Sigmoid colon (tissue), 7 donors: ENCODE measurements at regions of chr5 and their contacts with region 1.

Region 1: DNA sequence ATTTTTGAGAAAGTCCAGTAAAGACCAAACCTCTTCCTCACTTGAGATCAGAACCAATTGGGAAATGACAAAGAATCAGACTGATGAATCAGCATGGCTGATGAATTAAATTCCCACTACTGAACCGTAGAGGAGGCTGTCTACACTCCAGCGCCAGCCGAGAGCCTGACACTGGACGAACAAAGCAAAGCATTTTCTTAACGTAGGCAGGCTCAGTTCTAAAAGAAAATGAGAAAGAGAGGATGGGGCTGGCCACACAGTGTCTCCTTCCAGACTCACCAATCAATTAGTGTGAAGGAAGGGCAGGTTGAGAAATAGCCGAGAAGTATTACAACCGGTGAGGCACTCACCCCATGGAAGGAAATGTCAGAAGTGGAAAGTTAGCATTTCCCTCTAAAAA is 49.4 kb downstream of the ITGA1 start:
- DNase-seq: no peak
- H3K4me3 ChIP-seq: peak overlapping the region in 2 of 4 donors; percentile 8 to 19
- H3K27ac ChIP-seq: peak overlapping the region; percentile 76 to 83 (median 80)
- H3K4me1 ChIP-seq: peaks cover 0 to 69% (median 62%) of the 10 kb centered on the region in 4 donors
- H3K27me3 ChIP-seq: no peaks in the 10 kb centered on the region
- CTCF ChIP-seq: no peak
- EP300 ChIP-seq: no peak
- POLR2A ChIP-seq: no peak

Region 2: GRCh38 chr5:52577546-52577945 is 259.5 kb before region 1 on chr5:
- intact Hi-C with region 1: no loop called
- DNase-seq: no peak
- H3K4me3 ChIP-seq: no peak overlapping the region
- H3K27ac ChIP-seq: no peak overlapping the region
- H3K4me1 ChIP-seq: no peaks in the 10 kb centered on the region
- H3K27me3 ChIP-seq: no peaks in the 10 kb centered on the region
- CTCF ChIP-seq: no peak
- EP300 ChIP-seq: no peak
- POLR2A ChIP-seq: no peak

Region 3: DNA sequence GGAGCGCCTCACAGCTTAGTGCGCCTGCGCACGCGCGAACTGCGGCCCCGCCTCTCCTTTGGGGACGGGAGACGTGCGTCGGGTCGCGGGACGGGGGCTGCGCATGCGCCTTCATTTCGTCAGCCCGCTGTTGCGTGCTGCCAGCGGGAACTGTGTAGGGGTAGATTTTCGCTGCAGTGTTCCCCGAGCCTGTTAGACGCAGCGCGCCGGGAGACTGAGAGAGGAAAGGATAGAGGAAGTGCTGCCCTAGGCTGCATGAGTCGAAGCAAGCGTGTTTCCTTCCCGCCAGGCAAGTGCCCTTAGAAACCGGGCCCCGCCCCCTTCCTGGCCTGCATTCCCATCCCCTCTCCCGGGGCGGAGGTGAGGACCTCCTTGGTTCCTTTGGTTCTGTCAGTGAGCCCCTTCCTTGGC is 37.1 kb before region 1 on chr5:
- intact Hi-C with region 1: loop called (anchors 5 kb)
- DNase-seq: peak; percentile 97
- H3K4me3 ChIP-seq: peak overlapping the region; percentile 47 to 71 (median 56)
- H3K27ac ChIP-seq: peak overlapping the region; percentile 91 to 97 (median 94)
- H3K4me1 ChIP-seq: peaks cover 0 to 93% (median 82%) of the 10 kb centered on the region in 4 donors
- H3K27me3 ChIP-seq: no peaks in the 10 kb centered on the region
- CTCF ChIP-seq: no peak
- EP300 ChIP-seq: no peak
- POLR2A ChIP-seq: peak; percentile 66 to 67

Region 4: DNA sequence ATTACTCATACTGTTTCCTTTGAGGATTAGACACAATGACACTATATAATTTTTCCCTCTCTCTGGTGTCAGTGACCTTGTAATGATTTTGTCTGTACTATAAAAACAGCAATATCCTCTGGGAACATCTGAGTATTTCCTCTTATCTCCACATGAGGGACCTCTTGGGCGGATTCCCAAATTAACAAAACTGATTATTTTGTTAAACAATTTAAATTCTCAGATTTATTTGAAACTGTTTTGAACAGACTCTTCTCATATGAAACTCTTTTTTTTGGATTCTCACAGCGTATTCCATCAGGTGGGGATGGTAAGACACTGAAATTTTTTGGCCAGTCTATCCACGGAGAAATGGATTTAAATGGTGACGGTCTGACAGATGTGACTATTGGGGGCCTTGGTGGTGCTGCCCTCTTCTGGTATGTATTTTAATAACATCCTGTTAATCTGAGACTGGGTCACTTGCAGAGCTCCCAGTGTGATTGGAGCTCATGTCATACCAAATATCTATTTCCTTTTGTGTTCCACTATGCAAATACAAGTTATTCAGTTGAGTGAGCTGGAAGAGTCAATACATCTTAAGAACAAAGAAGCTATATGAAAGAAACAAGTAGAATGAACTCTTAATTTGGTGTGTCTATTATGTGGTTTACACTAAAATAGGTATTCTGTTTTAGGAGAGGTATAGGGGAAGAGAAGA is 78.3 kb after region 1 on chr5:
- intact Hi-C with region 1: no loop called
- DNase-seq: peak; percentile 70
- H3K4me3 ChIP-seq: peak overlapping the region in 1 of 4 donors; percentile 31
- H3K27ac ChIP-seq: peak overlapping the region; percentile 1 to 59 (median 34)
- H3K4me1 ChIP-seq: peaks cover 0 to 21% (median 9%) of the 10 kb centered on the region in 4 donors
- H3K27me3 ChIP-seq: no peaks in the 10 kb centered on the region
- CTCF ChIP-seq: peak; percentile 55 to 76 (median 68)
- EP300 ChIP-seq: no peak
- POLR2A ChIP-seq: no peak

Region 5: DNA sequence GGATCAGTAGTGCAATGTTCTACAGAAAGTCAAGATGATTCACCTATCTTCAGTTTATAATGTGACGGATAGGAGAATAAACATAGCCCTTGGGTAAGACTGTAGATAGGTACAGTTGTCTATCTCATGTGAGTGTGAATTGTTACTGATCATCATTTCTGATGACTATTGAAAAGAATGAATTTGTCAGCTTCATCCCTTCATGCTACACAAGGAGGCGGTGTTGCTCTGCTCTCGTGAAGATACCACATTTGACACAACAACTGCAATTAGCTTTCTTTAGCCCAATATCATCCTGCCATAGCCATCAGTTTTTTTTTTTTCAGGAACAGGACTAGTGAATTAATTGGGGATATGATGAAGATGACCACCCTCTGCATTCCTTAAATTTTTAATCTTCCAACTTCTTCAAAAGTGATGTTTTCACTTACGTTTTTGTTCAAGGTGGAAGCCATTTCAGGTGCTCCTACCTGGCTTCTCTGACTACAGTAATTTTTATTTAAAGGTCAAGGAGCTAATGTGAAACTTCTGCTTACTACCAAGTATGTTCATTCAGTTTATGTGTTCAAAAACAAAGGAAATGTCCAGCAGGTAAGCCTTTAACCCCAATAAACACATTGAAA is 425.4 kb after region 1 on chr5:
- intact Hi-C with region 1: no loop called
- DNase-seq: no peak
- H3K4me3 ChIP-seq: no peak overlapping the region
- H3K27ac ChIP-seq: no peak overlapping the region
- H3K4me1 ChIP-seq: no peaks in the 10 kb centered on the region
- H3K27me3 ChIP-seq: no peaks in the 10 kb centered on the region
- CTCF ChIP-seq: no peak
- EP300 ChIP-seq: no peak
- POLR2A ChIP-seq: no peak